Activated naive CD4-positive, alpha-beta T cell treated with anti-CD3 and anti-CD28 coated beads for 36 hours (primary cell): ENCODE measurements at regions of chr1 and their contacts with region 1.

Region 1: DNA sequence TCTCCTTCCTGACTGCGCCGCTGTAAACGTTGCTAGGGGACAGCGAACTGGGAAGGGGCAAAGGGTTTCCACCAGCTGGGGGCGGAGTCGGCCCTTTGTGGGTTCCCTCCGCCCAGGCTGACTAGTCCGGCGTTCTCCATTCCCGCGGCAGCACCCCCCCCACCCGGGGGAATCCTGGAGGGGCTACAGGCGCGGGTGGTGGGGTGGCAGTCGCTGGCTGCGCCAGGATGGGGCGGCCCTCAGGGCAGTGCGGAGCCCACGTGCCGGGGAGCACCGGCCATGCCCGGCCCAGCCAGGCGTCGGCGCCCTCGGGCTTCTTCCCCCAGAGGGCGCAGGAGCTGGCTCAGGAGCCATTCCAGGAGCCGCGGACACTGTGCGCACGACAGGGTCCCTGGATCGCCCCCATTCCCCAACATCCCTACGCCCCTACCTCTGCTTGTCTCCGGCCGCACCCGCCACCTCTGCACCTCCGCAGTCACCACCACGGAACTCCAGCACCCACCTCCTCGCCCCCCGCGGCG is 476 bp downstream of the BATF3 start:
- DNase-seq: peak; percentile 67
- H3K4me3 Mint-ChIP-seq: peak overlapping the region; percentile 87
- H3K27ac Mint-ChIP-seq: no peak overlapping the region
- H3K4me1 Mint-ChIP-seq: peaks cover 38% of the 10 kb centered on the region
- H3K27me3 Mint-ChIP-seq: peaks cover 11% of the 10 kb centered on the region

Region 2: DNA sequence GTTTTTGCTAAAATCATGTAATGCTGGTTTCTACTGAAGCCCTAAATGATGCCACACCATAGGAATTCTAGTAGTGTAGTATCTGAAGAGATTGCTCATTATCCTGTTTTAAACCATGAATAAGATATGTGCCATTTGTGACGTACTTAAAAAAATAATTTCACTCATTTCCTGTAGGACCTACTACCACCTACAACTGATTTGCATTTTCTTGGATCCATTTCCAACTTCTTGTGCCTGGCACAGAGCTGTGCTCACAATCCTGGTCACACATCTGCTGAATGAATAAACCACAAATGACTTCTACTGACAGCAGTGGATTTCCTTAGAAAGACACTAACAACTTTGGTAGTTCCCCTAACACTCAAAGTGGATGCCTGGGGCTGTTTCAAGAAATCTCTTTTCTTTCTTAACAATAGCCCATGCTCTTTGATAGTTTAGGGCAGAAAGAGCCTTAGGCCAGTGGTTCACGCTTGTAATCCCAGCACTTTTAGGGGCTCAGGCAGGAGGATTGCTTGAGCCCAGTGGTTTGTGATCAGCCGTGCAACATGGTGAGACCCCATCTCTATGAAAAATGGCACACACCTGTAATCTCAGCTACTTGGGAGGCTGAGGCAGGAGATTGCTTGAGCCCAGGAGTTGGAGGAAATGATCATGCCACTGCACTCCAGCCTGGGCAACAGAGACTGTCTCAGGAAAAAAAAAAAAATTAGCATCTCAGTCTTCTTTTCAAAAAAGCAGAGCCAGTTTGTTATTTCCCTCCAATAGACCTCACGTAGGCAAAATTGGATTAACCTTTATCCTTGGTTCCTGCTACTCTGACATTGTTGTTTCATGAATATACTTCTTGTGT is 13.5 kb after region 1 on chr1:
- CTCF ChIA-PET with region 1: interaction called, 5 read pairs
- intact Hi-C with region 1: loop called (anchors 1 kb)
- DNase-seq: peak; percentile 35
- H3K4me3 Mint-ChIP-seq: no peak overlapping the region
- H3K27ac Mint-ChIP-seq: no peak overlapping the region
- H3K4me1 Mint-ChIP-seq: peaks cover 2% of the 10 kb centered on the region
- H3K27me3 Mint-ChIP-seq: no peaks in the 10 kb centered on the region

Region 3: GRCh38 chr1:212749821-212750535 is 50.8 kb after region 1 on chr1:
- CTCF ChIA-PET with region 1: interaction called, 6 read pairs
- intact Hi-C with region 1: loop called (anchors 2 kb)
- DNase-seq: peak; percentile 22
- H3K4me3 Mint-ChIP-seq: no peak overlapping the region
- H3K27ac Mint-ChIP-seq: peak overlapping the region; percentile 32
- H3K4me1 Mint-ChIP-seq: peaks cover 54% of the 10 kb centered on the region
- H3K27me3 Mint-ChIP-seq: no peaks in the 10 kb centered on the region

Region 4: GRCh38 chr1:212782422-212783154 is 83.4 kb after region 1 on chr1:
- CTCF ChIA-PET with region 1: interaction called, 14 read pairs
- intact Hi-C with region 1: loop called (anchors 1 kb)
- DNase-seq: peak; percentile 13
- H3K4me3 Mint-ChIP-seq: no peak overlapping the region
- H3K27ac Mint-ChIP-seq: no peak overlapping the region
- H3K4me1 Mint-ChIP-seq: peaks cover 13% of the 10 kb centered on the region
- H3K27me3 Mint-ChIP-seq: no peaks in the 10 kb centered on the region